OCI-LY7 (cell line): ENCODE measurements at regions of chr9 and their contacts with region 1.

Region 1: DNA sequence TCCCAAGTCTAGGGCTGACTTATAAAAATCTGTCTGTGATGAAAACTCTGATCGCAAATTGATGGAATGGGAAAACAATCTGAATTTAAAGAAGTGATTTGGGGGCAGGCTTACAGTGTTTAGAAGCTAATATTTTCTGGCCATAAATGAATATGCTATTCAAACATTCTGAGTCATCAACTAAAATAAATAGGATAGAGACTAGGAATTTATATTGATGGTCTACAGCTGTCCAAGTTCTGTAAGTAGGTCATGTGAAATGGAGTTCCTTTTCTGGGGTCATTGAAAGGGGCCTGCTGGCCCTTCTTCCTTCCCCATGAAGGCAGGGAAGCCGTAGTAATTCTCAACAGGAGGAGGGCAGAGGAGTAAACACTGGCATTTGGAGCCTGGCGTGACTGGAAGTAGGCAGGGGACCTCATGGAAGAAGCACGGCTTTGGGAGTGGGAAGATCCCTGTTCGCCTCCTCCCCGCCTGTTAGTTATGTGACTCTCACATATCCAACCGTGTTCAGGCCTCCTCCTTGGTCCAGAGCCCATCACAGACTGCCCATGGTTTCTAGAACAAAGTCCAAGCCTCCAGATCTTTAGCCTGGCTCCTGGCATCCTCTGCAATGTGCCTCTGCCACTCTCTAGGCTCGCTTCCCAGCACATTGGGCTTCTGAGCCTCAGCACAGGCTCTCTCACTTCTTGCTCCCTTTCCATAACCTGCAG is 31.7 kb downstream of the ALG2 start:
- DNase-seq: no peak
- H3K4me3 ChIP-seq: no peak overlapping the region
- H3K27ac ChIP-seq: no peak overlapping the region
- H3K4me1 ChIP-seq: peaks cover 19% of the 10 kb centered on the region
- CTCF ChIP-seq: no peak

Region 2: GRCh38 chr9:99211741-99212140 is 21.7 kb after region 1 on chr9:
- CTCF ChIA-PET with region 1: no interaction called
- POLR2A ChIA-PET with region 1: no interaction called
- intact Hi-C with region 1: loop called (anchors 2 kb)
- DNase-seq: no peak
- H3K4me3 ChIP-seq: no peak overlapping the region
- H3K27ac ChIP-seq: no peak overlapping the region
- H3K4me1 ChIP-seq: no peaks in the 10 kb centered on the region
- CTCF ChIP-seq: no peak